ENCODE measurements at regions of chr16 and their contacts with region 1.

Region 1: GRCh38 chr16:23556881-23557778 is at the starts of genes EARS2 and UBFD1:
- DNase-seq: peak; percentile 97
- H3K4me3 Mint-ChIP-seq: peak within 1 kb of the TSS; percentile 87
- H3K27ac Mint-ChIP-seq: peak within 1 kb of the TSS; percentile 81
- H3K4me1 Mint-ChIP-seq: peaks cover 45% of the 10 kb centered on the region
- H3K27me3 Mint-ChIP-seq: no peaks in the 10 kb centered on the region
- total RNA-seq, gene EARS2: 9.3 to 11.0 TPM
- total RNA-seq, gene UBFD1: 36.6 to 39.7 TPM

Region 2: DNA sequence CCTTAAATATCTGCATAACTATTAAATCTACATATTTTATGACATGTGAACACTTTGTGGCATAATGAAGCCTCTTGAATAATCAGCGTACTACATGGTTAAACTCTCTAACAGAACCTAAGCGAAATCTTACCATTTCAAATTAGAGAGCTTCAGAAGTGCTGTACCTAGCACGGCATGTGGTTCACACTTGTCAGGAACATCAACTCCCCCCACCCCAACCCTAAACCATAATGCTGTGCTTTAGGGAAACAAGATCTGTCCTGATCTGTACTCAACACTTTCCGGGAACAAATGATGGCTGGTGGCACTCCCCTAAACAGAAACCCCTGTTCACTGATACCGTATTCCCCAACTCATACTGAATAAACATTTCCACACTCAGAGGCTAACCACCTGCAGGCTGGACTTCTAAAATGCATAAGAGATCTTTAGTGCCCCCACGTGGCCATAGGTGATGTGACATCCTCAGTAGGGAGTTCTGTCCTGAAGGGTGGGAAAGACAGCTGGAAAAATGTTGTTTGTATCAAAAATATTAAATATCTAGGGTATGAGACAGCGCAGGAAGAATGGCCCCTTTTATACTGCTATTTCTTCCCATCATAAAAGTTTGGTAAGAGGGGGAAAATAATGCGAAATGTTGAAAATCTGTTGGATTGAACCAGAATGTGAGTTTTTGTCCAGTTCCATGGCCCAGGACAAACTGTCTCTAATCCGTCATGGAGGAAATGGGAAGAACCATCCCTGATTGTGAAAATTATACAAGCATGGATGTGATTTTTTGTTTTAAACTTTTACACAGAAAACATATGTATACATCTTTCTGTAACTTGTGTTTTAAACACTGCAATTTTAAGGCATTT is 496.4 kb before region 1 on chr16:
- CTCF ChIA-PET with region 1: no interaction called
- POLR2A ChIA-PET with region 1: no interaction called
- DNase-seq: peak; percentile 55
- H3K4me3 Mint-ChIP-seq: no peak overlapping the region
- H3K27ac Mint-ChIP-seq: no peak overlapping the region
- H3K4me1 Mint-ChIP-seq: peaks cover 14% of the 10 kb centered on the region
- H3K27me3 Mint-ChIP-seq: peaks cover 16% of the 10 kb centered on the region

Region 3: GRCh38 chr16:23504451-23505179 is 52.5 kb before region 1 on chr16:
- CTCF ChIA-PET with region 1: interaction called, 6 read pairs
- POLR2A ChIA-PET with region 1: interaction called, 23 read pairs
- DNase-seq: peak; percentile 92
- H3K4me3 Mint-ChIP-seq: peak overlapping the region; percentile 2
- H3K27ac Mint-ChIP-seq: peak overlapping the region; percentile 71
- H3K4me1 Mint-ChIP-seq: peaks cover 78% of the 10 kb centered on the region
- H3K27me3 Mint-ChIP-seq: no peaks in the 10 kb centered on the region

Region 4: GRCh38 chr16:23516366-23517137 is 40.6 kb before region 1 on chr16:
- CTCF ChIA-PET with region 1: interaction called, 12 read pairs
- POLR2A ChIA-PET with region 1: interaction called, 3 read pairs
- DNase-seq: no peak
- H3K4me3 Mint-ChIP-seq: no peak overlapping the region
- H3K27ac Mint-ChIP-seq: no peak overlapping the region
- H3K4me1 Mint-ChIP-seq: peaks cover 40% of the 10 kb centered on the region
- H3K27me3 Mint-ChIP-seq: no peaks in the 10 kb centered on the region

Region 5: GRCh38 chr16:23528644-23529310 is 28.4 kb before region 1 on chr16:
- CTCF ChIA-PET with region 1: no interaction called
- POLR2A ChIA-PET with region 1: no interaction called
- DNase-seq: no peak
- H3K4me3 Mint-ChIP-seq: no peak overlapping the region
- H3K27ac Mint-ChIP-seq: no peak overlapping the region
- H3K4me1 Mint-ChIP-seq: no peaks in the 10 kb centered on the region
- H3K27me3 Mint-ChIP-seq: no peaks in the 10 kb centered on the region

Region 6: GRCh38 chr16:23608194-23608593 is 51.1 kb after region 1 on chr16:
- CTCF ChIA-PET with region 1: no interaction called
- POLR2A ChIA-PET with region 1: no interaction called
- DNase-seq: no peak
- H3K4me3 Mint-ChIP-seq: no peak overlapping the region
- H3K27ac Mint-ChIP-seq: no peak overlapping the region
- H3K4me1 Mint-ChIP-seq: no peaks in the 10 kb centered on the region
- H3K27me3 Mint-ChIP-seq: no peaks in the 10 kb centered on the region

Region 7: DNA sequence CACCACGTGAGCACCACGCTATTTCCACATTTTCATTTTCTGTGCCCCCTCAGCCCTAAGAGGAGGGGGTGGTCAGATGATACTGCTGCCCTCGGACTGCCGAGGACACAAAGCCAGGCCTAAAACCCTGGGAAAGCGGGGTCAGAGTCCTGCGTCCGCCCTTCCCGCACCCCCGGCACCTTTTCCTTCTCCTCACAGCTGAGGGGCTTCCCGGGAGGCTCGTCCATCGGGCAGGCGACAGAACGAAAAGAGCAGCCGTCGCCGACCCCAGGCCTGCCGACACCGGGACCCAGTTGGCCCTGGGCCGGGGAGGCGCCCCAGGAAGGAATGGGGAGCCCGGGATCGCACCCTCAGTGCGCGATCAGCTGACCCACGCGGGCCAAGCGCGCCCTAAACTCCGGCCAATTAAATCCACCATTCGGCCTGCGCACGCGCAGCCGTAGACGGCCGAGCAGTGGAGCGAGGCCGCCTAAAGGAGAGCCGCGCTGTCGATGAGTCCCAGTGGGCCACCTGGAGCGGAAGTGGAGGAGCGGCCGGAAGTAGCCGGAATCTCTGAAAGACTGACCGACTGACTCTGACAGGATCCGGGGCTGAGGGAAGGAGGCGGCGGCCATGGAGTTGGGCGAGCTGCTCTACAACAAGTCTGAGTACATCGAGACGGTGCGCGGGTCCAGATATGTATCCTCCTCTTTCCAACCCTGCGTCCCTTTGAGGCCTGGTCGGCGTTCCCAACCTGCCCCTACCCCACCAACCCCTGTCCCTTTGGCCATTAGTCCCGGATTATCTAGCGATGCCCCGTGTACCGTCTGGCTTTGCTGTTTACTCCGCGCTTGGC is 84.0 kb after region 1 on chr16 and contains the starts of genes DCTN5 and PALB2:
- CTCF ChIA-PET with region 1: no interaction called
- POLR2A ChIA-PET with region 1: interaction called, 16 read pairs
- DNase-seq: peak; percentile 90
- H3K4me3 Mint-ChIP-seq: peak within 1 kb of the TSS; percentile 98
- H3K27ac Mint-ChIP-seq: peak within 1 kb of the TSS; percentile 95
- H3K4me1 Mint-ChIP-seq: peaks cover 45% of the 10 kb centered on the region
- H3K27me3 Mint-ChIP-seq: no peaks in the 10 kb centered on the region
- total RNA-seq, gene DCTN5: 64.9 to 68.8 TPM
- total RNA-seq, gene PALB2: 16.8 to 17.0 TPM